WTC11 (cell line): ENCODE measurements at regions of chr6 and their contacts with region 1.

Region 1: GRCh38 chr6:27146706-27147505 is 100.6 kb upstream of the PRSS16 start:
- DNase-seq: peak; percentile 80
- ATAC-seq: peak; percentile 67
- H3K4me3 Mint-ChIP-seq: no peak overlapping the region
- H3K27ac Mint-ChIP-seq: no peak overlapping the region
- H3K4me1 Mint-ChIP-seq: peaks cover 23% of the 10 kb centered on the region
- H3K27me3 Mint-ChIP-seq: no peaks in the 10 kb centered on the region
- CTCF ChIP-seq: no peak

Region 2: DNA sequence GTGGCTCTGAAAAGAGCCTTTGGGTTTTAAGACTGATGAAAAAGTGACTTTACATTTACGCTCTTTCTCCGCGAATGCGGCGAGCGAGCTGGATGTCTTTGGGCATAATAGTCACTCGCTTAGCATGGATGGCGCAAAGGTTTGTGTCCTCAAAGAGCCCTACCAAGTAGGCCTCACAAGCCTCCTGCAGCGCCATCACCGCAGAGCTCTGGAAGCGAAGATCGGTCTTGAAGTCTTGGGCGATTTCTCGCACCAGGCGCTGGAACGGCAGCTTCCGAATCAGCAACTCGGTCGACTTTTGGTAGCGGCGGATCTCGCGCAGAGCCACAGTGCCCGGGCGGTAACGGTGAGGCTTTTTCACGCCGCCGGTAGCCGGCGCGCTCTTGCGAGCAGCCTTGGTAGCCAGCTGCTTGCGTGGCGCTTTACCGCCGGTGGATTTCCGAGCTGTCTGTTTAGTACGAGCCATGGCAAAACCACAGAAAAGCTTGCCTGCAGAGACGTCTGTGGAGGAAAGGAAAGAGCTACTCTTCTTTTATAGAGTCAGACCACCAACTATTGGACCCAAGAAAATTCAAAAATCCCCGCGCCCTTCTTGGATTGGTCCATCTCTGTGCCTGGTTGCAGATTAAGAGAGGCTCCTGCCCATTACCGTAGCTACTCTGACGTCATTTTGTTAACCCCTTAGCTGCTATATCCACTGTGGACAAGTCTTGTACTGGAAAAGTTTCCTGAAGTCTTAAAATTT is 1115.1 kb before region 1 on chr6:
- CTCF ChIA-PET with region 1: no interaction called
- POLR2A ChIA-PET with region 1: interaction called, 15 read pairs
- DNase-seq: peak; percentile 80
- ATAC-seq: peak; percentile 67
- H3K4me3 Mint-ChIP-seq: peak overlapping the region; percentile 91
- H3K27ac Mint-ChIP-seq: peak overlapping the region; percentile 100
- H3K4me1 Mint-ChIP-seq: peaks cover 59% of the 10 kb centered on the region
- H3K27me3 Mint-ChIP-seq: no peaks in the 10 kb centered on the region
- CTCF ChIP-seq: no peak

Region 3: DNA sequence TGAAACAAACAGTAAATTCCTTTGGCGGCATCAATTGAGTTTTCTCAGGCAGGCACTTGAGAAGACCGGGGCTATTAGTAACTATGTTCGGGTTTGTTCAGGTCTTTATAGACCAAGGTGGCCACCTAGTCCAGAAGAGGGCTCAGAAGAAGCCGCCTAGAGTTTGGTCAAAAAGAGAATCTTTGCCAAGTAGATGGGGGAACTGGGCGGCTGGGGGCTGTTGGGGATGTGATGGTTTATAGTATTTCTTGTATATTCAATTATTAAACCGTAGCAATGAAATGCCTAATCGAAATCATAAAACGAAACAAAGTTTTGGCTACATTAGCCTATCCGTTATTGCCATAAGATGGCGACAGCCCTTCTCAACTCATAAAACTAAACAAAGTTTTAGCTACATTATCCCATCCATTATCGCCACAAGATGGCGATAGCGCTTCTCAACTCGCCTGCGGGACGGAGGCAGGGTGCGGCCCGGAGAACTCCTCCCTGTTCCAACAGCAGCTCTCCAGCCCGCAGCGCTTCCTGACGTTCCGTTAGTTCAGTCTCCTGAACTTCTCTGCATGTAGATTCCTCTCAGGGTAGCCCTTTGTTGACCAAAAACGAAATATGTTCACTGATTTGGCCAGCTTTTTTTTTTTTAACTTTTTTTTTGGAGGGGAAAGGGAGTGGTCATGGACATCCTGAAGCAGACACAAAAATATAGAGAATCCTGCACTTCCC is 19.9 kb before region 1 on chr6:
- CTCF ChIA-PET with region 1: interaction called, 11 read pairs
- POLR2A ChIA-PET with region 1: interaction called, 286 read pairs
- DNase-seq: peak; percentile 86
- ATAC-seq: peak; percentile 81
- H3K4me3 Mint-ChIP-seq: peak overlapping the region; percentile 73
- H3K27ac Mint-ChIP-seq: no peak overlapping the region
- H3K4me1 Mint-ChIP-seq: peaks cover 39% of the 10 kb centered on the region
- H3K27me3 Mint-ChIP-seq: no peaks in the 10 kb centered on the region
- CTCF ChIP-seq: peak; percentile 34; the same call in 1 of the 2 replicates

Region 4: GRCh38 chr6:27177485-27178406 is 30.8 kb after region 1 on chr6:
- CTCF ChIA-PET with region 1: no interaction called
- POLR2A ChIA-PET with region 1: interaction called, 10 read pairs
- DNase-seq: peak; percentile 81
- ATAC-seq: peak; percentile 72
- H3K4me3 Mint-ChIP-seq: peak overlapping the region; percentile 98
- H3K27ac Mint-ChIP-seq: peak overlapping the region; percentile 97
- H3K4me1 Mint-ChIP-seq: peaks cover 23% of the 10 kb centered on the region
- H3K27me3 Mint-ChIP-seq: peaks cover 3% of the 10 kb centered on the region; the same call in 1 of the 2 replicates
- CTCF ChIP-seq: no peak

Region 5: GRCh38 chr6:27809939-27810767 is 663.2 kb after region 1 on chr6:
- CTCF ChIA-PET with region 1: no interaction called
- POLR2A ChIA-PET with region 1: interaction called, 229 read pairs
- DNase-seq: peak; percentile 58
- ATAC-seq: peak; percentile 7
- H3K4me3 Mint-ChIP-seq: peak overlapping the region; percentile 98
- H3K27ac Mint-ChIP-seq: peak overlapping the region; percentile 98
- H3K4me1 Mint-ChIP-seq: peaks cover 45% of the 10 kb centered on the region
- H3K27me3 Mint-ChIP-seq: peaks cover 3% of the 10 kb centered on the region
- CTCF ChIP-seq: no peak

Region 6: DNA sequence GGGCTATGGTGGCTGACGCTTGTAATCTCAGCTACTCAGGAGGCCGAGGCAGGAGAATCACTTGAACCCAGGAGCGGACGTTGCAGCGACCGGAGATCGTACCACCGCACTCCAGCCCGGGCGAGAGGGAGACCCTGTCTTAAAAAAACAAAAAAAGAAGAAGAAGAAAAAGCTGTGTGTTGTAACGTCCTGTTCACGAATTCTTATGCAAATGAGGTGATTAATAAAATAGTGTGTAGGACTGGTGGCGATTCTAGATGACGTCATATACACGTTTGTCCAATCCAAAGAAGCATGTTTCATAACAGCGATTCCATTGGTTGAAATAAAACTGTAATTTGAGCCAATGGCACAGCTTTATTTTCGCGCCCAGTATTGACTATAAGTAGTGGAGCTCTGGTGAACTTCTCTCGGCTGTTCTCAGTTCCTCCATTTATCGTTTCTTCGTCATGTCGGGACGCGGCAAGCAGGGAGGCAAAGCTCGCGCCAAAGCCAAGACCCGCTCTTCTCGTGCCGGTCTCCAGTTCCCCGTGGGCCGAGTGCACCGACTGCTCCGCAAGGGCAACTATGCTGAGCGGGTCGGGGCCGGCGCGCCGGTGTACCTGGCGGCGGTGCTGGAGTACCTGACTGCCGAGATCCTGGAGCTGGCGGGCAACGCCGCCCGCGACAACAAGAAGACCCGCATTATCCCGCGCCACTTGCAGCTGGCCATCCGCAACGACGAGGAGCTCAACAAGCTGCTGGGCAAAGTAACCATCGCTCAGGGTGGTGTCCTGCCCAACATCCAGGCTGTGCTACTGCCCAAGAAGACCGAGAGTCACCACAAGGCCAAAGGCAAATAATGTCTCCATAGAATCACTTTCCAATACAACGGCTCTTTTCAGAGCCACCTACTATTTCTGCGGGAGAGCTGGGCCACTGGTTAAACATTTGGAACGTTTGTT is 718.3 kb after region 1 on chr6:
- CTCF ChIA-PET with region 1: no interaction called
- POLR2A ChIA-PET with region 1: interaction called, 50 read pairs
- DNase-seq: peak; percentile 73
- ATAC-seq: peak; percentile 51
- H3K4me3 Mint-ChIP-seq: peak overlapping the region; percentile 97
- H3K27ac Mint-ChIP-seq: peak overlapping the region; percentile 100
- H3K4me1 Mint-ChIP-seq: peaks cover 25% of the 10 kb centered on the region
- H3K27me3 Mint-ChIP-seq: peaks cover 4% of the 10 kb centered on the region; the same call in 1 of the 2 replicates
- CTCF ChIP-seq: no peak